Posterior vena cava (tissue), 2 donors: ENCODE measurements at regions of chr9 and their contacts with region 1.

Region 1: GRCh38 chr9:38141746-38142591 is 72.9 kb upstream of the SHB start:
- DNase-seq: peak; percentile 22

Region 2: GRCh38 chr9:37920471-37921167 is 221.3 kb before region 1 on chr9:
- intact Hi-C with region 1: loop called in 1 of 2 experiments (anchors 10 kb)
- DNase-seq: peak; percentile 51

Region 3: GRCh38 chr9:38088006-38088925 is 53.7 kb before region 1 on chr9:
- intact Hi-C with region 1: loop called in 1 of 2 experiments (anchors 10 kb)
- DNase-seq: peak; percentile 94